Activated CD4-positive, alpha-beta memory T cell treated with anti-CD3 and anti-CD28 coated beads for 36 hours (primary cell): ENCODE measurements at regions of chr21 and their contacts with region 1.

Region 1: GRCh38 chr21:25457411-25457810 is 149.9 kb downstream of the MRPL39 start:
- DNase-seq: no peak
- H3K4me3 Mint-ChIP-seq: peak overlapping the region; percentile 68
- H3K27ac Mint-ChIP-seq: peak overlapping the region; percentile 93
- H3K4me1 Mint-ChIP-seq: peaks cover 77% of the 10 kb centered on the region
- H3K27me3 Mint-ChIP-seq: no peaks in the 10 kb centered on the region

Region 2: GRCh38 chr21:25283720-25284119 is 173.7 kb before region 1 on chr21:
- CTCF ChIA-PET with region 1: no interaction called
- POLR2A ChIA-PET with region 1: no interaction called
- intact Hi-C with region 1: no loop called
- DNase-seq: no peak
- H3K4me3 Mint-ChIP-seq: no peak overlapping the region
- H3K27ac Mint-ChIP-seq: no peak overlapping the region
- H3K4me1 Mint-ChIP-seq: no peaks in the 10 kb centered on the region
- H3K27me3 Mint-ChIP-seq: peaks cover 5% of the 10 kb centered on the region

Region 3: GRCh38 chr21:25385911-25386474 is 71.4 kb before region 1 on chr21:
- CTCF ChIA-PET with region 1: no interaction called
- POLR2A ChIA-PET with region 1: no interaction called
- intact Hi-C with region 1: no loop called
- DNase-seq: no peak
- H3K4me3 Mint-ChIP-seq: no peak overlapping the region
- H3K27ac Mint-ChIP-seq: no peak overlapping the region
- H3K4me1 Mint-ChIP-seq: peaks cover 5% of the 10 kb centered on the region
- H3K27me3 Mint-ChIP-seq: peaks cover 1% of the 10 kb centered on the region

Region 4: DNA sequence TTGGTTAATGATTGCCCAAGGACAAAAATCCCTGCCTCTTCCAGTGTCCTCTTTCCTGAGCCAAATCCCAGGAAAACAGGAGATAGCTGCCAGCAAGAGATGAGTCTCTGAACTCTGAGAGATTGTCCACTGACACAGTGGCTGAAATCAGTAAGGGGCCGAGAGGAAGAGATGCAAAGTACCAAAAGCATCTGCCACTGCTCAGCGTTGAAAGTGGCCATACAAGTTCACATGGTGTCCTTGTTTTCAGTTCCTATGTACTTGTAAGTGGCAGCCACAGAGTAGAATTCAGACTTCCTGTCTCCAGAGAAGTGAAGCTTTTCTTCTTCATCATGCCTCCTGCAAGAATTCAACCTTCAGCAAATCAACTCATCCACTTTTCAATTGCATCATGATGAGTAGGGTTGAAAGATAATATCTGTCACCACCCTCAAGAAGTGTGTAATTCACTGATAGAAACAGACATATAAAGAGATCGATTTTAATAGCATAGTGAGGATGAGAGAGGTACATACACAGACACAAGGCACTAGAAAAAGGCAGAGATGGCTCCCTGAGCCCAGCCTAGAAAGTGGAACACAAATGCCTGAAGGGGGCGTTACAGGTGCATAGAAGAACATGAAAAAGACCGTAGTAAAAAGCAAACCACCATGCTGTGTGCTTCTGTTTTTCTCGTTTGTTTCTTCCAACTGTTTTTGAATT is 35.9 kb before region 1 on chr21:
- CTCF ChIA-PET with region 1: interaction called, 5 read pairs
- POLR2A ChIA-PET with region 1: interaction called, 3 read pairs
- intact Hi-C with region 1: loop called (anchors 1 kb)
- DNase-seq: peak; percentile 79
- H3K4me3 Mint-ChIP-seq: peak overlapping the region; percentile 67
- H3K27ac Mint-ChIP-seq: peak overlapping the region; percentile 89
- H3K4me1 Mint-ChIP-seq: peaks cover 62% of the 10 kb centered on the region
- H3K27me3 Mint-ChIP-seq: no peaks in the 10 kb centered on the region

Region 5: DNA sequence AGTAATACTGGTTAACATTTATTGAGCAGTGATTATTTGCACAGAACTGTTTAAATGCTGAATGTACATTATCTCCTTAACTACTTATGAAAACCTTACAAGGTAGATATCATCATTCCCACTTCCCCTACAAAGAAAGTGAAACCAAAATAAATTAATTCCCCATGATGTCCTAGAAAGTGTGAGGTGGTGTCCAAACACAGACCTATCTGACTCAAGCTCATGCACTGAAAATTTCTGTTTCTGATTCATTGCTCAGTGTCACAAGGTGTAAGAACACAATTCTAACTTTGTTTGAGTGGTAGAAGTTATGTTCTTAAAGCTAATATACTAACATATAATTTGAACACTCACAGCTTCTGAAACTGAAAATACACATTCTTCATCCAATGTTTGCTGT is 28.9 kb before region 1 on chr21:
- CTCF ChIA-PET with region 1: interaction called, 4 read pairs
- POLR2A ChIA-PET with region 1: interaction called, 4 read pairs
- intact Hi-C with region 1: loop called (anchors 1 kb)
- DNase-seq: no peak
- H3K4me3 Mint-ChIP-seq: no peak overlapping the region
- H3K27ac Mint-ChIP-seq: peak overlapping the region; percentile 13
- H3K4me1 Mint-ChIP-seq: peaks cover 51% of the 10 kb centered on the region
- H3K27me3 Mint-ChIP-seq: no peaks in the 10 kb centered on the region

Region 6: GRCh38 chr21:25507522-25507921 is 50.1 kb after region 1 on chr21:
- CTCF ChIA-PET with region 1: interaction called, 3 read pairs
- POLR2A ChIA-PET with region 1: interaction called, 28 read pairs
- intact Hi-C with region 1: loop called (anchors 1 kb)
- DNase-seq: no peak
- H3K4me3 Mint-ChIP-seq: peak overlapping the region; percentile 24
- H3K27ac Mint-ChIP-seq: peak overlapping the region; percentile 85
- H3K4me1 Mint-ChIP-seq: peaks cover 55% of the 10 kb centered on the region
- H3K27me3 Mint-ChIP-seq: no peaks in the 10 kb centered on the region

Region 7: DNA sequence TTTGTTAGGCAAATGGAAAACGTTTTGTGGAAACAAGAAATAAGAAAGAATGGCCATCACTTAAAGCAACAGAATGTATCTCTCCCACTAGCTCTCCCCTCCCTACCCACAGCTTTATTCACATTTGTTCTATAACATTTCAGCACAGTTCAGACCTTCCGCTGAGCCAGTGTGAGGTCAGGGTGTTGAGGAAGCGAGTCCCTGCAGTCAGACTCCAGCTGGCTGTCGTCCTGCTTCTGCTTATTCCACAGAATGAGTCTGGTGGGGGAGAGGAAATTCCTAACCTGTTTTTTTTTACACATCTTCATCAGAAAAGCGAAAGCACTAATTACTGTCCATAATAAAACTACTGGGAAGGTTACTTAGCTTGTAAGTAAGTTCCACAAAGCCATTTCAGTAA is 110.8 kb after region 1 on chr21:
- CTCF ChIA-PET with region 1: interaction called, 3 read pairs
- POLR2A ChIA-PET with region 1: interaction called, 41 read pairs
- intact Hi-C with region 1: loop called (anchors 1 kb)
- DNase-seq: no peak
- H3K4me3 Mint-ChIP-seq: peak overlapping the region; percentile 80
- H3K27ac Mint-ChIP-seq: peak overlapping the region; percentile 94
- H3K4me1 Mint-ChIP-seq: peaks cover 66% of the 10 kb centered on the region
- H3K27me3 Mint-ChIP-seq: no peaks in the 10 kb centered on the region